ENCODE measurements at regions of chr1 and their contacts with region 1.

Region 1: DNA sequence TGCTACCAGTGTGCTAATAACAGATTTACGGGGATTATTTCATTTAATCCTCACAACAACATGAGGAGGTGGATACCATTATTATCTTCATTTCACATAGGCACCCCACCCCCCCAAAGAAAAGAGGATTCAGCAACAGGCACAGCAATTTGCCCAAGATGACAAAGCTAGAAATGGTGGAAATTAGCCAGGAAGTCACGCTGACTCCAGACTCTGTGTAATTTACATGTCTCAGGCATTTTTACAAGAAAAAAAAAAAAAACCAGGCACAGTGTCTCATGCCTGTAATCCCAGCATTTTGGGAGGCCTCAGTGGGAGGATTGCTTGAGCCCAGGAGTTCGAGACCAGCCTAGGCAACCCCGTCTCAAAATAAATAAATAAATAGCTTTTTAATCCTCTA is 37.5 kb upstream of the PRDM2 start:
- DNase-seq: no peak
- ATAC-seq: no peak
- H3K4me3 ChIP-seq: no peak overlapping the region
- H3K27ac ChIP-seq: no peak overlapping the region
- H3K4me1 ChIP-seq: no peaks in the 10 kb centered on the region
- H3K27me3 ChIP-seq: peaks cover 8% of the 10 kb centered on the region
- CTCF ChIP-seq: no peak

Region 2: GRCh38 chr1:13564073-13564472 is 98.4 kb before region 1 on chr1:
- intact Hi-C with region 1: no loop called
- DNase-seq: no peak
- ATAC-seq: no peak
- H3K4me3 ChIP-seq: no peak overlapping the region
- H3K27ac ChIP-seq: no peak overlapping the region
- H3K4me1 ChIP-seq: no peaks in the 10 kb centered on the region
- H3K27me3 ChIP-seq: no peaks in the 10 kb centered on the region
- CTCF ChIP-seq: no peak

Region 3: GRCh38 chr1:13583966-13584791 is 78.3 kb before region 1 on chr1:
- intact Hi-C with region 1: no loop called
- DNase-seq: peak; percentile 55
- ATAC-seq: peak; percentile 81
- H3K4me3 ChIP-seq: peak overlapping the region; percentile 54
- H3K27ac ChIP-seq: peak overlapping the region; percentile 81
- H3K4me1 ChIP-seq: peaks cover 3% of the 10 kb centered on the region
- H3K27me3 ChIP-seq: peaks cover 27% of the 10 kb centered on the region
- CTCF ChIP-seq: no peak

Region 4: DNA sequence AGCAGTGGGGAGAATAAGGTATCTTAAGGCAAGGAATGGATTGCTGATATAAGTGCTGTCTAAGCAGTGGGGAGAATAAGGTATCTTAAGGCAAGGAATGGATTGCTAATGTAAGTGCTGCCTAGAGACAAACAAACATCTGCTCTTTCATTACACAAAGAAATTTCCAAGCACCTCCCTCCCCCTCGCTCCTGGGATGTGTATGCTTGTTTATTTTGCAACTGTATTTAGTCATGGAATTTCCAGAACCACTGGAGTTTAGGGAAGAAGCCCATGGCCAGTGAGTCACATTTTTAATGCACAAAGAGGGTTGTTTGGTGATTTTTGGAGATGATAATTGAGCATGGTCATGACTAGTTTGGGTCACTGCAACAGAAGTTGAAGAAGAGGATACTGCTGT is 57.3 kb before region 1 on chr1:
- intact Hi-C with region 1: no loop called
- DNase-seq: no peak
- ATAC-seq: peak in 1 of 2 donors; percentile 56
- H3K4me3 ChIP-seq: no peak overlapping the region
- H3K27ac ChIP-seq: no peak overlapping the region
- H3K4me1 ChIP-seq: no peaks in the 10 kb centered on the region
- H3K27me3 ChIP-seq: no peaks in the 10 kb centered on the region
- CTCF ChIP-seq: no peak

Region 5: GRCh38 chr1:13759088-13759487 is 96.6 kb after region 1 on chr1:
- intact Hi-C with region 1: no loop called
- DNase-seq: no peak
- ATAC-seq: peak; percentile 69 to 83
- H3K4me3 ChIP-seq: no peak overlapping the region
- H3K27ac ChIP-seq: no peak overlapping the region
- H3K4me1 ChIP-seq: peaks cover 88% of the 10 kb centered on the region
- H3K27me3 ChIP-seq: no peaks in the 10 kb centered on the region
- CTCF ChIP-seq: peak; percentile 7

Region 6: DNA sequence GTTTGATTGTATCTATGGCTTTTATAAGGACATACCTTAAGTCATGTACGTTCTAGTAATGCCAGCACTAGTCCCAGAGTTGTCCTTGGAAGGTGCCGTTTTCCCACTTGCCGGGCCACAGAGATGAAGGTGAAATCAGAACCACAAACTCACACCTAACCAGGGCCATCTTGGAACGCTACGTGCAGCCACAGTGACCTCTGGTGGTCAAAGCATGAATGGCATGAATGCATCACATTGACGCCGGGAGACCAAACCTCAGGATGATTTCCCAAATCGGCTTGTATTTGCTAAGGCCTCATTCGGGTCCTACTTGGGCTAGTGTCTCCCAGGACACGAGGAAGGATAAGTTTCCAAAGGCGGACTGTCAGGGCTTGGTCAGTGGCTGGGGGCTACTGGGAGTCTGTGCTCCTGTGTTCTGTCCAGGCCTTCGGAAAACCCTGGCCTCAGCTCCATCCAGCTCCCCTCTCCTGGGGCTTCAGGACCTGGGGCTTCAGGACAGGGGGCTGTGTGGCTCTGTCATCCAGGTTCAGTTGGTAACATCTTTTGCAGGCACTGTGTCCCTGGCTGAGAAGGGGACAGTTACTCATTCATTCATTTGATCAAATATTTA is 298.0 kb after region 1 on chr1:
- intact Hi-C with region 1: loop called (anchors 10 kb)
- DNase-seq: peak; percentile 61
- ATAC-seq: peak; percentile 86 to 88
- H3K4me3 ChIP-seq: no peak overlapping the region
- H3K27ac ChIP-seq: no peak overlapping the region
- H3K4me1 ChIP-seq: peaks cover 3% of the 10 kb centered on the region
- H3K27me3 ChIP-seq: peaks cover 11% of the 10 kb centered on the region
- CTCF ChIP-seq: peak; percentile 94